Activated CD8-positive, alpha-beta memory T cell treated with anti-CD3 and anti-CD28 coated beads, Interleukin-2, amount 10 ng/mL, durations not matched to agents 7 days and 5 days (primary cell): ENCODE measurements at regions of chr6 and their contacts with region 1.

Region 1: DNA sequence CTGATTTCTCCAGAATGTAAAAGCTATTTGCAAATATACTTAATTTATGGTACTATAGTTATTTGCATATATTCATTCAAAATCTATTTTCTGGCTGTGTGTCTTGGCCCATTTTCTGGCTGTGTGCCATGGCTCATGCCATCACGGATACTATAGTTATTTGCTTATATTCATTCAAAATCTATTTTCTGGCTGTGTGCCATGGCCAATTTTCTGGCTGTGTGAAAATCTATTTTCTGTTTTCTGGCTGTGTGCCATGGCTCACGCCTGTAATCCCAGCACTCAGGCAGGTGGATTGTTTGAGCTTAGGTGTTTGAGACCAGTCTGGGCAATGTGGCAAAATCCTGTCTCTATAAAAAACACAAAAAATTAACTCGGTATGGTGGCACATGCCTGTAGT is 28.9 kb upstream of the RIPK1 start:
- DNase-seq: no peak
- ATAC-seq: no peak
- H3K4me3 Mint-ChIP-seq: no peak overlapping the region
- H3K27ac Mint-ChIP-seq: no peak overlapping the region
- H3K4me1 Mint-ChIP-seq: no peaks in the 10 kb centered on the region
- H3K27me3 Mint-ChIP-seq: peaks cover 17% of the 10 kb centered on the region

Region 2: DNA sequence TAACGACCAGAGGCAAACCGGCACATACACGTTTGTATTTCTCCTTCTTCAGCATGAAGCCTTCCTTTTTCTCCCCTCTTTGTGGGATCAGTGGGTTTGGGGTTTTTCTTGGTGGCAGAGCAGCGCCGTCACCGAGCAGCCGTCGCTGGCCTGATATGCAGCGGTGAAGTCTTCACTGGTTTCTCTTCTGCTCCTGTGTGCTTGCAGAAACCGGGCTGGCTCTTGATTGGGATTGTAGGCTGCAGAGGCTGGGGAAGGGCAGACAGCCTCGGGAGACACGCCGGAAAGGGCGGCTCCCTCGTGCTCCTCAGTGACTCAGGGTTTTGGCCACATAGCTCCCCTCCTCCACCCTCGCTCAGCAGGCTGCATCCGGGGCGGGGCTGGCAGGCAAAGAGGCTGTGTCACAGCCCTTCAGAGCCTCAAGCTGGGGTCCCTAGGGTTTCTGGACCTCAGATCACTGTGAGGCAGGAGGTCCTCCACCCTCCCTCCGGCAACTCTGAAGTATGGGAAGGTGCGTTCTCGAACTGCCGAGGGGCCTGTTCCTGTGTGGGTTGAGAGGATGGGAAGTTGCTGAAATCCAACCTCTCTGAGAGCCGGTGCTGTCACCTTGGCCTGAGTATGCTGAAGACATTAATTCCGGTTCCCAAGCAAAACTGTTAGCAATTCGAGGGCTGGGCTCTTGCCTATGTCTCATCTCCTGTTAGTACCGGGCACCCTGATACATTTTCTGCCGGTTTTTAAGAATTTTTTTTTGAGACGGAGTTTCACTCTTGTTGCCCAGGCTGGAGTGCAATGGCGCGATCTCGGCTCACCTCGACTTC is 15.5 kb before region 1 on chr6:
- CTCF ChIA-PET with region 1: interaction called, 11 read pairs
- DNase-seq: peak; percentile 96
- ATAC-seq: peak; percentile 93
- H3K4me3 Mint-ChIP-seq: peak overlapping the region; percentile 79
- H3K27ac Mint-ChIP-seq: peak overlapping the region; percentile 90
- H3K4me1 Mint-ChIP-seq: peaks cover 67% of the 10 kb centered on the region
- H3K27me3 Mint-ChIP-seq: peaks cover 5% of the 10 kb centered on the region

Region 3: DNA sequence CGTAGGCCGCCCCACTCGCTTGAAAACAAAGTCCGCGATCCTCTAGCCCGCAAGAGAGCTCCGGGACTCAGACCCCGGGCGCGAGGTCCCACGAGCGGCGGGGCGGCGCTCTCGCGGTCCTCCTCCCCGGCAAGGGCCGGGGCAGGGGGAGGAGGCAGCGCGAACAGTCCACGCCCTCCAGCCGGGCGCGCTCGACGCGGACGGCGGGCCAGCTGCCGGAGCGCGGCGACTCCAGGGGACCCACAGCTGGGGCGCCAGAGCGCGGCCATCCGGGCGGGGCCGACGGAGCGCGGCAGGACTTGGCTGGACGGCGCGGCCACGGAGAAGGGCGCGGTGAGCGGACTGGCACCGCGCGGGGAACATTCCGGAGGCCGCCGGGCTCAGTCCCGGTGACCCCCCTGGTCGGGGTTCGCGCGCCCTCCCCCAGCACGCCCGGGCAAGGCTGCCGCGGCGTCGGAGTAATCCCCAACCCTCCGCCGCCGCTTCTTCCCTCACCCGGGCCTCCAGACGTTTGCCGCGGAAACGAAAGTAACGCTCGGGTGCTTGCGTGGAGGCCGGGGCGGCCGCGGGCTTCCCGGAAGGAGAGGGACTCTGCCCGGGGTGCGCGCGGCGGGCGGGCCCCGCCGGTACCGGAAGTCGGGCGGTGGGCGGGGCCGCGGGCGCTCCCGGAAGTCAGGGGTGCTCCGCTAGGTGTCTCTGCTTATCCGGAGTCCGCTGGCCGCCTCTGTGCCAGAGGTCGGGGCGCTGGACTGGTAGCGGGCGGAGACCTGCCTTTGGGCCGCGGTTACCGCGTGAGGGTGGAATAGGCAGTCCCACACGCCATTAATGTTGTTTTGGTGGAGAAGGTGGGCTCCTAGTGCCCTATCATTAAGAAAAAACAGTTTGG is 29.2 kb after region 1 on chr6 and contains the start of gene RIPK1:
- CTCF ChIA-PET with region 1: no interaction called
- DNase-seq: peak; percentile 96
- ATAC-seq: peak; percentile 80
- H3K4me3 Mint-ChIP-seq: peak within 1 kb of the TSS; percentile 96
- H3K27ac Mint-ChIP-seq: peak within 1 kb of the TSS; percentile 97
- H3K4me1 Mint-ChIP-seq: peaks cover 55% of the 10 kb centered on the region
- H3K27me3 Mint-ChIP-seq: no peaks in the 10 kb centered on the region
- total RNA-seq, gene RIPK1: 26.6 to 29.6 TPM